HCT116 (cell line): ENCODE measurements at regions of chr9 and their contacts with region 1.

Region 1: DNA sequence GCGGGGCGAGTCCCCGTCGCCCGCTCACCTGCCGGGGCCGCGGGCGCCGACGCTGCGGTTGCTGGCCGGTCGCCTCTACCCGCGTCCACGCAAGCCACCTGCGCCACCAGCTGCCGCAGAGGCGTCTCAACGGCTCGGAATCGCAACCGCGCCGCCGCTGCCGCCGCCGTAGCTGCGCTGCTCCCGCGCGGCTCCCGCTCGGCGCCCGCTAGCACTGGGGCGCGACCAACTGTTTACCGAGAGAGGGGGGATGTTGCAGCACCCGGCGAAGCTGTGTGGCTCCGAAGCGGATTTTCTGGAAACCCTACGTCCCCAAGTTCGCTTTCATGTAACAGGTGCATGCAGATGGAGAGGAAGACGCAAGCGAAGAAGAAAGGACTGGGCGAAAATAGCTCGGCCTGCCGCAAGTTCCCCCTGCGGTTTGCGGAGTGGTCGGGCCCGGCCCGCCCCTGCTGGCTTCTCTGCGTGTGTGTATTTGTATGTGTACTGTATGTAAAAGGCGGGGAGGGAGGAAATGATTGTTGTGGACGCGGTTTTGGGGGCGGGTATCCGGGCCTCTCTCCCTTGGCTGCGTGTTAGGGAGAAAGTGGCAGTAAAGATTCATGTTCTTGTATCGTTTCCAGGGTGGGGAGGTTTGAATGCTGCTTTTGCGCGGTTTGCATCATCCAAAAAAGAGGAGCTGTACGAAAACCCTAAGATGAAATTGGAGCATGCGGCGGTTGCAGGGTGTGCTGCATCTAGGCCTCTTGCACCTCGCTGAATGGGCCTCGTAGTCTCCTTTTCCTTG is at the start of gene PSIP1:
- DNase-seq: peak; percentile 65
- ATAC-seq: peak; percentile 79
- H3K4me3 ChIP-seq: peak within 1 kb of the TSS; percentile 79
- H3K27ac ChIP-seq: peak within 1 kb of the TSS; percentile 95
- H3K4me1 ChIP-seq: peaks cover 11 to 27% of the 10 kb centered on the region in 2 experiments
- H3K27me3 ChIP-seq: no peaks in the 10 kb centered on the region
- CTCF ChIP-seq: no peak
- POLR2A ChIP-seq: peak; percentile 95
- RAD21 ChIP-seq: no peak
- total RNA-seq, gene PSIP1: 99.1 TPM

Region 2: GRCh38 chr9:15552636-15553527 is 41.9 kb after region 1 on chr9 and contains the start of gene CCDC171:
- CTCF ChIA-PET with region 1: no interaction called
- POLR2A ChIA-PET with region 1: interaction called, 9 read pairs
- RAD21 ChIA-PET with region 1: interaction called in 1 of 2 experiments, 3 read pairs
- intact Hi-C with region 1: loop called (anchors 5 kb)
- DNase-seq: peak; percentile 86
- ATAC-seq: peak; percentile 96
- H3K4me3 ChIP-seq: peak within 1 kb of the TSS; percentile 72 to 75
- H3K27ac ChIP-seq: peak within 1 kb of the TSS; percentile 71
- H3K4me1 ChIP-seq: peaks cover 5 to 22% of the 10 kb centered on the region in 2 experiments; a peak in 3 of 4 replicates
- H3K27me3 ChIP-seq: no peaks in the 10 kb centered on the region
- CTCF ChIP-seq: no peak
- POLR2A ChIP-seq: peak; percentile 89
- RAD21 ChIP-seq: no peak
- total RNA-seq, gene CCDC171: 2.6 TPM